CD8-positive, alpha-beta T cell (primary cell): ENCODE measurements at regions of chr16 and their contacts with region 1.

Region 1: DNA sequence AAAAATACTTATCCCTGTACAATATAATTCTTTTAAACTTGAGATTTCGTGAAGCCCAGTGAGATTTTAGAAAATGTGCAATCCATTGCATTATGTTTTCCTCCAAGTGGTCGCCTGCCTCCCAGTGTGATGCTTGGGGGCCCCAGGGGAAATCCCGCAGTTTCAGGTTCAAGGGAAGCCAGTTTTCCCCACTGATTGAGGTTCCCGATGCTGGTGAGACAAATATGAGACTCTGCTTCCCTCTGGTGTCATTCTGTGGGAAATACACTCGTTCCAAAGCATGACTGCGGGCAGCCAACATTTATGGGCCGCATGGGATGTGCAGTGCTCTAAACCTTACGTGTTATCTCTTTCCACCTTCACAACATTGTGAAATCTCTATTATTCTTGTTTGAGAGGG is 200.8 kb downstream of the PRKCB start:
- DNase-seq: peak in 6 of 9 experiments; percentile 14 to 73 (median 46)
- ATAC-seq: peak; percentile 56
- H3K4me3 ChIP-seq: no peak overlapping the region
- H3K4me3 Mint-ChIP-seq: peak overlapping the region; percentile 49
- H3K27ac ChIP-seq: no peak overlapping the region
- H3K27ac Mint-ChIP-seq: no peak overlapping the region
- H3K4me1 ChIP-seq: peaks cover 50% of the 10 kb centered on the region
- H3K4me1 Mint-ChIP-seq: peaks cover 48% of the 10 kb centered on the region
- H3K27me3 ChIP-seq: no peaks in the 10 kb centered on the region
- H3K27me3 Mint-ChIP-seq: no peaks in the 10 kb centered on the region
- CTCF ChIP-seq: peak; percentile 82

Region 2: GRCh38 chr16:22933173-22933572 is 1103.4 kb before region 1 on chr16:
- CTCF ChIA-PET with region 1: no interaction called
- POLR2A ChIA-PET with region 1: no interaction called
- intact Hi-C with region 1: no loop called
- DNase-seq: no peak
- ATAC-seq: no peak
- H3K4me3 ChIP-seq: no peak overlapping the region
- H3K4me3 Mint-ChIP-seq: no peak overlapping the region
- H3K27ac ChIP-seq: no peak overlapping the region
- H3K27ac Mint-ChIP-seq: no peak overlapping the region
- H3K4me1 ChIP-seq: no peaks in the 10 kb centered on the region
- H3K4me1 Mint-ChIP-seq: no peaks in the 10 kb centered on the region
- H3K27me3 ChIP-seq: no peaks in the 10 kb centered on the region
- H3K27me3 Mint-ChIP-seq: peaks cover 26% of the 10 kb centered on the region
- CTCF ChIP-seq: no peak

Region 3: GRCh38 chr16:23466066-23466885 is 570.3 kb before region 1 on chr16:
- CTCF ChIA-PET with region 1: no interaction called
- POLR2A ChIA-PET with region 1: no interaction called
- intact Hi-C with region 1: no loop called
- DNase-seq: no peak
- ATAC-seq: no peak
- H3K4me3 ChIP-seq: no peak overlapping the region
- H3K4me3 Mint-ChIP-seq: no peak overlapping the region
- H3K27ac ChIP-seq: no peak overlapping the region
- H3K27ac Mint-ChIP-seq: peak overlapping the region; percentile 2
- H3K4me1 ChIP-seq: no peaks in the 10 kb centered on the region
- H3K4me1 Mint-ChIP-seq: no peaks in the 10 kb centered on the region
- H3K27me3 ChIP-seq: no peaks in the 10 kb centered on the region
- H3K27me3 Mint-ChIP-seq: no peaks in the 10 kb centered on the region
- CTCF ChIP-seq: no peak

Region 4: GRCh38 chr16:23678430-23679273 is 358.0 kb before region 1 on chr16 and contains the start of gene PLK1:
- CTCF ChIA-PET with region 1: interaction called, 3 read pairs
- POLR2A ChIA-PET with region 1: no interaction called
- intact Hi-C with region 1: loop called in 1 of 2 experiments (anchors 2 kb)
- DNase-seq: peak; percentile 44 to 76 (median 68)
- ATAC-seq: peak; percentile 98
- H3K4me3 ChIP-seq: peak within 1 kb of the TSS; percentile 65 to 71
- H3K4me3 Mint-ChIP-seq: peak within 1 kb of the TSS; percentile 85
- H3K27ac ChIP-seq: no peak within 1 kb of the TSS
- H3K27ac Mint-ChIP-seq: no peak within 1 kb of the TSS
- H3K4me1 ChIP-seq: peaks cover 6% of the 10 kb centered on the region
- H3K4me1 Mint-ChIP-seq: peaks cover 17% of the 10 kb centered on the region
- H3K27me3 ChIP-seq: no peaks in the 10 kb centered on the region
- H3K27me3 Mint-ChIP-seq: no peaks in the 10 kb centered on the region
- CTCF ChIP-seq: no peak
- total RNA-seq, gene PLK1: 0.25 to 0.76 TPM

Region 5: DNA sequence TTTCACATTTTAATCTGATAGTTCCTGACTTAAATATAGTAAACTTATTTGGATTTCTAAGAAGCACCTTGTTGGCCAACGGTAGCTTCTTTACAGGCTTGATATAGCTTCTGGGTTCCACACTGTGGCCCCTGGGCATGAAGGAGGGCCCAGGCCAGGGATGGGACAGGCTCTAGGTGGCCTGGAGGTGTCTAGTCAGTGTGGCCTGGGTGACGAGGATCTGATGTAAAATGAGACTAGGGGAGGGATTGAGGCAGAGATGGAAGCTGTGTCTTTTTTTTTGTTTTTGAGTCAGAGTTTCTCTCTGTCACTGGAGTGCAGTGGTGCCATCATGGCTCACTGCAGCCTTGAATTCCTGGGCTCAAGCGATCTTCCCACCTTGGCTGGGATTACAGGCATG is 13.8 kb before region 1 on chr16:
- CTCF ChIA-PET with region 1: interaction called, 52 read pairs
- POLR2A ChIA-PET with region 1: no interaction called
- intact Hi-C with region 1: no loop called
- DNase-seq: no peak
- ATAC-seq: no peak
- H3K4me3 ChIP-seq: no peak overlapping the region
- H3K4me3 Mint-ChIP-seq: no peak overlapping the region
- H3K27ac ChIP-seq: no peak overlapping the region
- H3K27ac Mint-ChIP-seq: no peak overlapping the region
- H3K4me1 ChIP-seq: peaks cover 11% of the 10 kb centered on the region
- H3K4me1 Mint-ChIP-seq: peaks cover 43% of the 10 kb centered on the region
- H3K27me3 ChIP-seq: no peaks in the 10 kb centered on the region
- H3K27me3 Mint-ChIP-seq: no peaks in the 10 kb centered on the region
- CTCF ChIP-seq: no peak

Region 6: GRCh38 chr16:24246911-24247607 is 210.4 kb after region 1 on chr16:
- CTCF ChIA-PET with region 1: interaction called, 61 read pairs
- POLR2A ChIA-PET with region 1: no interaction called
- intact Hi-C with region 1: loop called in 1 of 2 experiments (anchors 1 kb)
- DNase-seq: no peak
- ATAC-seq: no peak
- H3K4me3 ChIP-seq: no peak overlapping the region
- H3K4me3 Mint-ChIP-seq: no peak overlapping the region
- H3K27ac ChIP-seq: no peak overlapping the region
- H3K27ac Mint-ChIP-seq: no peak overlapping the region
- H3K4me1 ChIP-seq: no peaks in the 10 kb centered on the region
- H3K4me1 Mint-ChIP-seq: no peaks in the 10 kb centered on the region
- H3K27me3 ChIP-seq: peaks cover 0 to 3% of the 10 kb centered on the region in 2 experiments
- H3K27me3 Mint-ChIP-seq: peaks cover 26% of the 10 kb centered on the region
- CTCF ChIP-seq: no peak